Activated naive CD4-positive, alpha-beta T cell treated with anti-CD3 and anti-CD28 coated beads for 36 hours (primary cell): ENCODE measurements at regions of chr6 and their contacts with region 1.

Region 1: DNA sequence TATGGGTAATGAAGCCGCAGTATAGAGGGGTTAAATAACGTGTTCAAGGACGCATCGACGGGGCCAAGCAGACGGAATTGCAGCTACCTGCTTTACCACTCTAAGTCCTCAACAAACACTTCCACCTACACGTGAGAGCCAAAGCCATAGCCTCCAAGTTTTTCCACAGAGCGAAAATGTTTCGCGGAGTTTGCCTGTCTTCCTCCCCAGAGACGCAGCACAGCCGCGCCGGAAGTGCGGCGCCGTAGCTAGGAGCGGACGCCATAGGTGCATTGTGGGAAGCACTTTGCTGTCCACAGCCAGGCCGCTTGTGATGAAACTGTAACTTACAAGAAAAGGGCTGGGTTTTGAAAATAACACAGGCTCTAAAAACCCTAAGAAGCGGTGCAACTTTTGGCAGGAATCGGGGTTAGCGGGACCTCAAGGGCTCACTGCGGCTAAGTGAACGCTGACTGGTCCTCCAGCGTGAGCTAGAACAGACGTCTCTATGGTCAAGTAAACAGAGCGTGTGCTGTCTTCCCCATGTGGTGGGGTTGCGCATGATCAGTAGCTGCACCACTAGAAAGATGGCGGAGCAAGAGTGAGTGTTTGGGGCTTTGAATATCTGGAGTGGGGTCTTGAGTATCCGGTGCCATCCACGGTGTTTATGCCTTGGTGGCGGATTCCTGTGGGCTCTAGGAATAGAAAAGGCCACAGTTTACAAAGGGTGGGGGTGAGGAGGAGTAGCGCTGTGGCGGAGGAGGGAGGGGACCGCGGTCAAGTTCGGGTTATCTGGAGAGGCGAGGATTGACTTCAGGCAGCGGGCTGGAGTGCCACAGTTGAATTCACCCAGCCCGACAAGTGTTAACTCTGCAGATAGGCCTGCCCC is at the start of gene RPL7L1:
- DNase-seq: peak; percentile 87
- H3K4me3 Mint-ChIP-seq: peak within 1 kb of the TSS; percentile 98
- H3K27ac Mint-ChIP-seq: peak within 1 kb of the TSS; percentile 99
- H3K4me1 Mint-ChIP-seq: peaks cover 23% of the 10 kb centered on the region
- H3K27me3 Mint-ChIP-seq: no peaks in the 10 kb centered on the region
- total RNA-seq, gene RPL7L1: 99.0 to 101 TPM

Region 2: GRCh38 chr6:42661540-42662153 is 218.0 kb before region 1 on chr6:
- CTCF ChIA-PET with region 1: interaction called, 53 read pairs
- intact Hi-C with region 1: loop called (anchors 1 kb)
- DNase-seq: peak; percentile 92
- H3K4me3 Mint-ChIP-seq: no peak overlapping the region
- H3K27ac Mint-ChIP-seq: no peak overlapping the region
- H3K4me1 Mint-ChIP-seq: no peaks in the 10 kb centered on the region
- H3K27me3 Mint-ChIP-seq: no peaks in the 10 kb centered on the region

Region 3: GRCh38 chr6:42726485-42727086 is 153.0 kb before region 1 on chr6:
- CTCF ChIA-PET with region 1: interaction called, 13 read pairs
- intact Hi-C with region 1: loop called (anchors 1 kb)
- DNase-seq: peak; percentile 84
- H3K4me3 Mint-ChIP-seq: peak overlapping the region; percentile 76
- H3K27ac Mint-ChIP-seq: peak overlapping the region; percentile 91
- H3K4me1 Mint-ChIP-seq: peaks cover 15% of the 10 kb centered on the region
- H3K27me3 Mint-ChIP-seq: no peaks in the 10 kb centered on the region

Region 4: DNA sequence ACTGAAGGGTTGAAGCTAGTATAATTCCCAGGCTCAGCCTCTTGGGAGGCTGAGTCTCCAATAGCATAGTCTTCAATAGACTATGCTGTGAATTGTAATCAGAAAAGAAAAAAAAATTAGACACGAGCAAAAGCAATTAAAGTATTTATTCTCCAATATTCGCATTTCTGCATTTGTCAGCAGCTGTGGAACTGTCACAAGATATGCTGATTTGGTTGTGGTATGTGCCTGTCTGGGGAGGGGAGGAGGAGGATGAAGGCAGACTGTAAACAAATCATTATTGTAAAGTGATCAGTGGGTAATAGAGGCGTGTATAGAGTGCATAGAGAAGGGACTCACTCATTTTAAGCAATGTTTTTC is 107.9 kb before region 1 on chr6:
- CTCF ChIA-PET with region 1: interaction called, 6 read pairs
- intact Hi-C with region 1: loop called (anchors 1 kb)
- DNase-seq: no peak
- H3K4me3 Mint-ChIP-seq: peak overlapping the region; percentile 71
- H3K27ac Mint-ChIP-seq: peak overlapping the region; percentile 96
- H3K4me1 Mint-ChIP-seq: peaks cover 62% of the 10 kb centered on the region
- H3K27me3 Mint-ChIP-seq: no peaks in the 10 kb centered on the region

Region 5: DNA sequence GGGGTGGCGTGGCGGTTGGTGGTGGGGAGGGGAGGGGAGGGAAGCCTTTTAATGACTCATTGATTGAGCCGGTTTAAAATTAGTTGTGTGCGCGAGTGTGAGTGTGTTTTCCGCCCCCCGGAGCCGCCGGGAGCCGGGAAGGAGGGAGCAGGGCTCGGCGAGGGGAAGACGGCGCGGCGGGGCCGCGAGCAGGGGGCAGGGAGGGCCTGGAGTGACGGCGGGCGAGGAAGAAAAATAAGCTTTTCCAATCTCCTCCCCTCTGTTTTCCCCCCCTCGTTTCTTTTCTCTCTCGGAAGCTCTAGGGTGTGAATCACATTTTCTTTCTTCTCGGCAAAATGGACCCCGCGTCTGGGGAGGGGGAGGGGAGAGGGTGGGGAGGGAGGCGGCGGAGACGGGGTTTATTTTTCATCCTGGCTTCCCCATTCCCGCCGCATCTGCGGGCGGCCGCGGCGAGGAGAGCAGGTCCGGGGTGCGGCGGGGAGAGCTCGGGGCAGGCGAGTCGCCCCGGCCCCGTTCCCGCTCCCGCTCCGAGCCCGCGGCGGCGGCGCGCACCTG is 96.9 kb before region 1 on chr6:
- CTCF ChIA-PET with region 1: interaction called, 3 read pairs
- intact Hi-C with region 1: loop called (anchors 1 kb)
- DNase-seq: peak; percentile 75
- H3K4me3 Mint-ChIP-seq: peak overlapping the region; percentile 81
- H3K27ac Mint-ChIP-seq: peak overlapping the region; percentile 100
- H3K4me1 Mint-ChIP-seq: peaks cover 26% of the 10 kb centered on the region
- H3K27me3 Mint-ChIP-seq: no peaks in the 10 kb centered on the region

Region 6: GRCh38 chr6:42821846-42822245 is 57.8 kb before region 1 on chr6:
- CTCF ChIA-PET with region 1: no interaction called
- intact Hi-C with region 1: no loop called
- DNase-seq: no peak
- H3K4me3 Mint-ChIP-seq: no peak overlapping the region
- H3K27ac Mint-ChIP-seq: no peak overlapping the region
- H3K4me1 Mint-ChIP-seq: peaks cover 23% of the 10 kb centered on the region
- H3K27me3 Mint-ChIP-seq: no peaks in the 10 kb centered on the region

Region 7: DNA sequence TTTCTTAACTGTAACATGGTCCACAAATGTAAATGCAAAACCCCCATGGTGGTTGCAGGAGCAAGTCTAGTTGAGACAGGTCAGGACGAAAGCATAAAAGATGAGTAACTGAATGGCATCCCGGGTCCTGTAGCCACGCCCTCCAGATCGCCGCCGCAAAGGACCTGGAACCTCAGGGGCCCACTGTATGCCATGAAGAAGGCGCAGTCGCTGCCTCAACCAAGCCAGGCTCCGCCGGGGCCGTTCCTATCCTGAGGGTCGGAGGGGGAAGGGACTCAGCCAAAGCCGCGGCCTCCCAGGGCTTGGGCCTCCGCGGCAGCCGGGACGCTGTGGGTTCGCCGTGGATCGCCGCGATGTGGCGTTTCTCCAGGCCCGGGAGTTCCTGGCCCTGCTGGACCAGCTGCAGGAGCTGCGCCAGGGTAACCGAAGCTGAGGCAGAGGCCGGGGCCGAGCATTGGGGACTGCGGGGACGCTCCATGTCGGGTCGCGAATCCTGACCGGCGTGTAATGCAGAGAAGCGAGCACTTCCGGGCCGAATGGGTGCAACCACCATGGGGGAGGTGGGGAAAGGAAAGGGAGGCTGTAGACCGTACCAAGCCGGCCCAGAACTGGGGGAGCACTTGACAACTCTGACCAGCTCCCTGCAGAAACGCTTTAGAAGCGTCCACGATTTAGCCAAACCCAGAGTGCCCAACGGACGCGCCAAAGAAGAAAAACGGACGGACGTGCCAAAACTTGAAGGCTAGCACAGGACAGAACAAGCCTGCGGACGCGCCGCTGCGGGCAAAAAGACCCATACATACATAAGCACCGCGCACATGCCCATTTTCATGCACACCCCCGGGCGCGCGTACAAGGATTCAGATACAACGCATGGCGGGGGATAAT is 10.9 kb after region 1 on chr6:
- CTCF ChIA-PET with region 1: interaction called, 6 read pairs
- intact Hi-C with region 1: loop called (anchors 1 kb)
- DNase-seq: peak; percentile 96
- H3K4me3 Mint-ChIP-seq: peak overlapping the region; percentile 82
- H3K27ac Mint-ChIP-seq: peak overlapping the region; percentile 95
- H3K4me1 Mint-ChIP-seq: peaks cover 32% of the 10 kb centered on the region
- H3K27me3 Mint-ChIP-seq: no peaks in the 10 kb centered on the region

Region 8: DNA sequence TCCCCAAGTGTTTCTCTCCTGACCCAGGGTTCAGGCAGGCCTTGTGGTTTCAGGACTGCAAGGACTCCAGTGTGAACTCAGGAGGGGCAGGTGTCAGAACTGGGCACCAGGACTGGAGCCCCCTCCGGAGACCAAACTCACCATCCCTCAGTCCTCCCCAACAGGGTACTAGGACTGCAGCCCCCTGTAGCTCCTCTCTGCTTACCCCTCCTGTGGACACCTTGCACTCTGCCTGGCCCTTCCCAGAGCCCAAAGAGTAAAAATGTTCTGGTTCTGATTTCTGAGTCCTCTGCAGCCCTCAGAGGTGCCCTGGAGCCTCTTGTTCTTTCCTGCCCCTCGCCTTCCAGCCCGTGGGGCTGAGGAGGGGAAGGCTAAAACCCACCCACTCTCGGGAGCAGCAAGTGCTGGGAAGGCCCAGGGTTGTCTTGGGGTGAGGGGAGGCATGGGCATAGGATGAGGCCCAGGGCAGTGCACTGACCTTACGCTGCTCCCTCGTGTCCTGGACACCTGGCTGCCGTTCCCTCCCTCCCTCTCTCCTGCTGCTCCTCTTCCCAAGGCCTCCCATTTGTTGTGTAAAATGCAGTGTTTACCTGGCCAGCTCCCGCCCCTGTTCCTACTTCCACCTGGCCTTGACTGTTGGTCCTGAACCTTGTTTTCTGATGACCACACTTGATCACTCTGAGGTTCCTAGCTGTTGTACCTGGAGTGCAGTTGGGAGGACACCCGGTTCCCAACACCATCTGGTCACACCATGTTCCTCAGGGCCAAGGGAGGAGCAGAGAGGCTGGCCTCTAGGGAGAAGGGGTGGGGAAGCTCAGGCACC is 59.6 kb after region 1 on chr6:
- CTCF ChIA-PET with region 1: no interaction called
- intact Hi-C with region 1: no loop called
- DNase-seq: no peak
- H3K4me3 Mint-ChIP-seq: no peak overlapping the region
- H3K27ac Mint-ChIP-seq: no peak overlapping the region
- H3K4me1 Mint-ChIP-seq: peaks cover 2% of the 10 kb centered on the region
- H3K27me3 Mint-ChIP-seq: no peaks in the 10 kb centered on the region